Mammary epithelial cell (primary cell): ENCODE measurements at regions of chrX and their contacts with region 1.

Region 1: GRCh38 chrX:2584251-2585157 is 83.7 kb upstream of the DHRSX start:
- DNase-seq: peak; percentile 31
- H3K4me3 ChIP-seq: no peak overlapping the region
- H3K27ac ChIP-seq: no peak overlapping the region
- H3K4me1 ChIP-seq: no peaks in the 10 kb centered on the region
- H3K27me3 ChIP-seq: peaks cover 6% of the 10 kb centered on the region
- CTCF ChIP-seq: no peak

Region 2: DNA sequence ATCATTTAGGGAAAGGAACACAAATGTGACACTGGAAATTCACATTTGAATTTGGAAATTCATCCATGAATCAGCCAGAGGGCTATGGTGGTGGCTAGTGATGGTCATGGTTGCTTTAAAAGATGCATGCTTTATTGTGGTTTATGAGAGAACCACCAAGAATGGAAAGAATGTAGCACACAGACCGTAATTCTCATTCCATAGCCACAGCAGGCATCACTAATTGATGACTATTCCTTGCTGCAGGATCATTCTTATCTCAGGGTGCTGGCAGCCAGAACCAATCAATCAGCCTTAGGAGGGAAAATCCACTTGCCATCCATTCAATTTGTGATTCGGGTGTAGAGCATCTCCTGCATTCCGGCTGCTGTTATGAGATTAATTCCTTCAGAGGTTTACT is 199.3 kb before region 1 on chrX:
- CTCF ChIA-PET with region 1: no interaction called
- dilution Hi-C with region 1: no loop called
- in situ Hi-C with region 1: no loop called
- intact Hi-C with region 1: loop called (anchors 5 kb)
- DNase-seq: peak; percentile 86
- H3K4me3 ChIP-seq: no peak overlapping the region
- H3K27ac ChIP-seq: no peak overlapping the region
- H3K4me1 ChIP-seq: no peaks in the 10 kb centered on the region
- H3K27me3 ChIP-seq: no peaks in the 10 kb centered on the region
- CTCF ChIP-seq: no peak